ENCODE measurements at regions of chr9 and their contacts with region 1.

Region 1: GRCh38 chr9:98056269-98057137 is at the start of gene NANS:
- DNase-seq: peak; percentile 94
- H3K4me3 Mint-ChIP-seq: peak within 1 kb of the TSS; percentile 97
- H3K27ac Mint-ChIP-seq: peak within 1 kb of the TSS; percentile 92
- H3K4me1 Mint-ChIP-seq: peaks cover 37% of the 10 kb centered on the region
- H3K27me3 Mint-ChIP-seq: no peaks in the 10 kb centered on the region
- total RNA-seq, gene NANS: 46.1 to 47.3 TPM

Region 2: DNA sequence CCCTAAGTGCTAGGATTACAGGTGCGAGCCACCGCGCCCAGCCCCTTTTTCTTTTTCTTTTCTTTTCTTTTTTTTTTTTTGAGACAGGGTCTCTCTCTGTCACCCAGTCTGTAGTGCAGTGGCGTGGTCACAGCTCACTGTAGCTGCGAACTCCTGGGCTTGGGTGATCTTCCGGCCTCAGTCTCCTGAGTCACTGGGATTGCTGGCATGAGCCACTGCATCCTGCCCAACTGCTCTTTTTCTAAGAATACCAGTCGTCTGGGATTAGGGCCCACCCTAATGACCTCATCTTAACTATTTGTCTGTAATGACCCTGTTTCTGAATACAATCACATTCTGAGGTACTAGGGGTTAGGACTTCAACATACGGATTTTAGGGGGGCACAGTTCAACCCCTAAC is 34.1 kb before region 1 on chr9:
- CTCF ChIA-PET with region 1: no interaction called
- POLR2A ChIA-PET with region 1: no interaction called
- DNase-seq: no peak
- H3K4me3 Mint-ChIP-seq: no peak overlapping the region
- H3K27ac Mint-ChIP-seq: no peak overlapping the region
- H3K4me1 Mint-ChIP-seq: peaks cover 2% of the 10 kb centered on the region
- H3K27me3 Mint-ChIP-seq: no peaks in the 10 kb centered on the region

Region 3: DNA sequence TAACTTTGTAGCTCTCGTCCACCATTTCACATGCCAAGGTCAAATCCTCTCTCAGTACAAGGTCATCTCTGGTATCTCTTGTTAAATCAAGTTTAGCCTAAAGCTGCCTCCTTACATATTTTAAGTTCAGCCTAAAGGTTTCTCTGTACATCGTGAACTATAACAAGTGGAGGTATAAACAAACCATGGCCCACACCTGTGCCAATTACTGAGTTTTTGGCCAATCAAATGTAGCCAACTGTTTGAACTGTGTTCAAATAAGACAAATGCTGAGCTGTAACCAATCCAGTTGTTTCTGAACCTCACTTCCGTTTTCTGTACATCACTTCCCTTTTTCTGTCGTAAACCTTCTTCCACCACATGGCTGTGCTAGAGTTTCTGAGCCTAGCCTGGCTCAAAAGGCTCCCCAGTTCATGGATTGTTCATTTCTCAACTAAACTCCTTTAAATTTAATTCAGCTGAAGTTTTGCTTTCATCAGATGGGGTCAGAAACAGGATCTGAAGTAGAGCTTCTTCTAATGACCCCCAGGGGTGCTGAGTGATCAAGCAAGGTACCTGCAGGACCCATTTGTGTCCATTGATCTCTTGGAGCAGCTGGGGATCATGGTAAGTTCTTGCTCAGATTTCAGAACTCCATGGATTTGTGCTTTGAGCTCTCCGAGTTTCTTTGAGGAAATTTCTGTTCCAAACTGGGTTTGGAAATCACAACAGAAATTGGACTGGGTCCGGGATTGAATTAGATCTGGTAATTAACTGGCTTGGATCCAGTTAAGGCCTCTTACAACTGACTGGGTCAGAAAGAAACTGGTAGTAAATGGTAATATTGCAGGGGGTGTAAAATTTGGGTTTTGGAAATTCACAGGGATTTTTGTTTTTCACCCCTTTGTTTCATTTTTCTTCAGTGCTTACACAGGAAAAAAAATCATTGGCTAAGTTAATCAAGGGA is 11.0 kb before region 1 on chr9:
- CTCF ChIA-PET with region 1: interaction called, 48 read pairs
- POLR2A ChIA-PET with region 1: interaction called, 66 read pairs
- DNase-seq: peak; percentile 44
- H3K4me3 Mint-ChIP-seq: peak overlapping the region; percentile 79
- H3K27ac Mint-ChIP-seq: peak overlapping the region; percentile 82
- H3K4me1 Mint-ChIP-seq: peaks cover 49% of the 10 kb centered on the region
- H3K27me3 Mint-ChIP-seq: no peaks in the 10 kb centered on the region

Region 4: GRCh38 chr9:98158071-98158831 is 101.7 kb after region 1 on chr9:
- CTCF ChIA-PET with region 1: no interaction called
- POLR2A ChIA-PET with region 1: no interaction called
- DNase-seq: no peak
- H3K4me3 Mint-ChIP-seq: no peak overlapping the region
- H3K27ac Mint-ChIP-seq: no peak overlapping the region
- H3K4me1 Mint-ChIP-seq: peaks cover 8% of the 10 kb centered on the region
- H3K27me3 Mint-ChIP-seq: no peaks in the 10 kb centered on the region

Measured in activated CD4-positive, alpha-beta memory T cell treated with anti-CD3 and anti-CD28 coated beads, Interleukin-2, amount 10 ng/mL, durations not matched to agents 7 days and 5 days (primary cell).